ENCODE measurements at regions of chr22 and their contacts with region 1.

Region 1: GRCh38 chr22:41403532-41404318 is 22.0 kb downstream of the TEF start:
- DNase-seq: peak; percentile 76
- ATAC-seq: peak; percentile 92
- H3K4me3 ChIP-seq: peak overlapping the region in 1 of 3 experiments; percentile 56; a peak in 1 of 6 replicates
- H3K27ac ChIP-seq: no peak overlapping the region
- H3K4me1 ChIP-seq: peaks cover 47% of the 10 kb centered on the region
- H3K27me3 ChIP-seq: no peaks in the 10 kb centered on the region
- CTCF ChIP-seq: peak; percentile 100
- EP300 ChIP-seq: no peak
- POLR2A ChIP-seq: no peak
- RAD21 ChIP-seq: peak; percentile 98

Region 2: GRCh38 chr22:41204992-41205900 is 198.5 kb before region 1 on chr22 and contains the start of gene L3MBTL2:
- CTCF ChIA-PET with region 1: no interaction called
- POLR2A ChIA-PET with region 1: no interaction called
- in situ Hi-C with region 1: no loop called
- intact Hi-C with region 1: no loop called
- DNase-seq: peak; percentile 95
- ATAC-seq: peak; percentile 100
- H3K4me3 ChIP-seq: peak within 1 kb of the TSS; percentile 70 to 90 (median 81)
- H3K27ac ChIP-seq: peak within 1 kb of the TSS; percentile 69
- H3K4me1 ChIP-seq: peaks cover 34% of the 10 kb centered on the region
- H3K27me3 ChIP-seq: peaks cover 0 to 2% of the 10 kb centered on the region in 2 experiments; a peak in 2 of 5 replicates
- CTCF ChIP-seq: 0 out of 2 replicates have a peak, but pooled peaks have one; percentile 1
- EP300 ChIP-seq: no peak
- POLR2A ChIP-seq: peak; percentile 76 to 80
- RAD21 ChIP-seq: no peak
- total RNA-seq, gene L3MBTL2: 33.7 and 37.6 TPM in 2 replicates

Region 3: GRCh38 chr22:41468381-41469217 is 64.9 kb after region 1 on chr22 and contains the starts of genes ACO2 and PHF5A:
- CTCF ChIA-PET with region 1: no interaction called
- POLR2A ChIA-PET with region 1: interaction called, 18 read pairs
- in situ Hi-C with region 1: no loop called
- intact Hi-C with region 1: no loop called
- DNase-seq: peak; percentile 96
- ATAC-seq: peak; percentile 93
- H3K4me3 ChIP-seq: peak within 1 kb of the TSS; percentile 92 to 95 (median 92)
- H3K27ac ChIP-seq: peak within 1 kb of the TSS; percentile 98
- H3K4me1 ChIP-seq: peaks cover 66% of the 10 kb centered on the region
- H3K27me3 ChIP-seq: no peaks in the 10 kb centered on the region; a peak in 1 of 5 replicates
- CTCF ChIP-seq: no peak; the same call in 1 of the 2 replicates
- EP300 ChIP-seq: peak in 1 of 2 experiments; percentile 100; a peak in 2 of 4 replicates
- POLR2A ChIP-seq: peak; percentile 75 to 82
- RAD21 ChIP-seq: no peak
- total RNA-seq, gene ACO2: 39.3 and 45.6 TPM in 2 replicates
- total RNA-seq, gene PHF5A: 105 and 154 TPM in 2 replicates

Region 4: DNA sequence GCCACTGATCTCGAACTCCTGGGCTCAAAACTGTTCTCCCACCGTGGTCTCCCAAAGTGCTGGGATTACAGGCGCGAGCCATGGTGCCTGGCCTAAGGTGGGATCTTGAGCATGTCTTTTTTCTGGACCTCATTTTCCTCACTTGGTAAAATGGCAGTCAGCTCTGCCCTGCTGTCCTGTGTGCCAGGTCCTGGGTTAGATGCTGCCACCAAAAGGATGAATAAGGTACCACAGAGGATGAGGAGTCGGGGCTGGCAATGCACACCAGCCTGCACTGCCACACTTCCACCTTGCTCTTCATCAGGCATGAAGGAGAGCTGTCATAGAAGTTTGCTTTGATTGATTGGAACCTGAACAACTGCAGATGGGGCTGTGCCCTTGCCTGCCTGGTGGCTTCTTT is 97.5 kb after region 1 on chr22:
- CTCF ChIA-PET with region 1: interaction called, 8 read pairs
- POLR2A ChIA-PET with region 1: no interaction called
- in situ Hi-C with region 1: no loop called
- intact Hi-C with region 1: loop called (anchors 1 kb)
- DNase-seq: peak; percentile 23
- ATAC-seq: peak; percentile 79
- H3K4me3 ChIP-seq: no peak overlapping the region
- H3K27ac ChIP-seq: no peak overlapping the region
- H3K4me1 ChIP-seq: no peaks in the 10 kb centered on the region
- H3K27me3 ChIP-seq: no peaks in the 10 kb centered on the region
- CTCF ChIP-seq: peak; percentile 53
- EP300 ChIP-seq: no peak
- POLR2A ChIP-seq: no peak
- RAD21 ChIP-seq: 0 out of 2 replicates have a peak, but pooled peaks have one; percentile 38

Region 5: DNA sequence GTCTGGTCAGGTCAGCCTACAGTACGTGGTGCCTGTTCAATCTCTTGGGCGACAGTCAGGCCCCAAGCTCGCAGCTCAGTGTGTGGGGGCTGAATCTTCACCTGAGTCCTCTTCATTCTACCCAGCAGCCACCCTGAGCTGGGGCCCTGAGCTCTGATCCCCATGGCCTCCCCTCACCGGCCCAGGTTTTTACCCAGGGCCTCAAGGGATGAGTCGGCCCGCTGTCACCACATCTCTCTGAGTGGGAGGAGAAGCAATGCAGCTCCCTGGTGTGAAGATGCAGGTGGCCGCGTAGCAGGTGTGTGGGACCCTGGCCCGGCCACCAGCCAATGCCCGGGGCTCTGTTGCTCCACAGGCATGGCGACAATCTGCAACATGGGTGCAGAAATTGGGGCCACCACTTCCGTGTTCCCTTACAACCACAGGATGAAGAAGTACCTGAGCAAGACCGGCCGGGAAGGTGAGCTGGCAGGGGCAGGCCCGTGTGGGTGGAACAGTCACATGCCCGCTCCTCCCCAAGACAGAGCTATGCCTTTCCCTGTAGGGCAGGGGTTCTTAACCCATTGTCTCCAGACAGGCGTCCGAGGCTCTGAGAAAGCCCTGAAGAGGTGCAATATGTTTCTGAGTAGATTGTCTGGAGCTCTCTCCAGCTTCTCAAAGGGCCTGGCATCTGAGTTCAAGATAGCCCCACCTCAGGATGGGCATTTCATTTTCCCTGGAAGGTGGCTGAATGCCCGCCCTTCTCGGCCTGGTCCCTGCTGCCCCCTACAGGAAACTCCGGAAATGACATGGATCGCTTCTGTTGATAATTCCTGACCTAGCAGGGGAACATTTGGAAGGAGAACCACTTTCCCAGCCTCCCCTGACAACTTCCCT is 113.7 kb after region 1 on chr22:
- CTCF ChIA-PET with region 1: interaction called, 37 read pairs
- POLR2A ChIA-PET with region 1: interaction called, 4 read pairs
- in situ Hi-C with region 1: loop called (anchors 5 kb)
- intact Hi-C with region 1: loop called (anchors 2 kb)
- DNase-seq: peak; percentile 27
- ATAC-seq: peak; percentile 36
- H3K4me3 ChIP-seq: no peak overlapping the region
- H3K27ac ChIP-seq: no peak overlapping the region
- H3K4me1 ChIP-seq: peaks cover 7% of the 10 kb centered on the region
- H3K27me3 ChIP-seq: no peaks in the 10 kb centered on the region
- CTCF ChIP-seq: peak; percentile 92
- EP300 ChIP-seq: no peak
- POLR2A ChIP-seq: no peak
- RAD21 ChIP-seq: peak; percentile 85

Region 6: DNA sequence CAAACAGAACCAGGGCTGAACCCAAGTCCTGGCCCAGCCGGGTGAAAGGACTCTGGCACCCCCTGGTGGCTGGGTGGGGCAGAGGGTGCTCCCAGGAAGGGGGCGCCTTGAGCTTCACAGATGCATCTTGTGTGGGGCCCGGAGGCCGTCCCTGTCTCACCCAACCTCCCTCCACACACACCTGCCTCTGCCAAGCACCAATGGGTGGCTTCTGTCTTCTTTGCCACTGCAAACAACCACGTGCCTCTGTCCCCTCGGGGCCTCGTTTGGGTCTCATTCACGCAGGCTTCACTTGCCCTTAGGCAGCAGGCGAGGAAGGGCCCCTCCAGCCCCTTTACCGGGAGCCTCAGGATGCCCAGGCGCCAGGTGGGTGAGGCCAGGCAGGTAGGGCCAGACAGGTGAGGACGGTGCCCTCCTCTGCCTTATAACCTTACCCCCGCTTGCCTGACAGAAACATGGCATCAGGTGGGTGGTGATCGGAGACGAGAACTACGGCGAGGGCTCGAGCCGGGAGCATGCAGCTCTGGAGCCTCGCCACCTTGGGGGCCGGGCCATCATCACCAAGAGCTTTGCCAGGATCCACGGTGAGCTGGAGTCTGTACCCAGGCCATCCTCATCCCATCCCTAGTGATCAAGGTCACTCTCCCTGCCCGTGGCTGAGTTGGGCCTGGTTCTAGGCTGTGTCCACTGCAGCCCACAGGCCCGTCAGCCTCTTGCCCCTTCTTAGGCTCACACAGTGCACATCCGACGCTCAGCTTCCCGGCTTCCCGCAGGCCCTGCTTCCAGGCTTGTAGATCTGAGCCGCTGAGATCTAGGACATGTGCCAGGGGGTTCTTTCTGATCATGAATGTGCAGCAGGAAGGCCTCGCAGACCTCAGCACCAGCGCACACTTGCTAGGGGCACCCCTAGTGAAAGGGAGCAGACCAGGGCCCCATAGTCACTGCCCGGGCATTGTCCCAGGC is 123.4 kb after region 1 on chr22:
- CTCF ChIA-PET with region 1: interaction called, 11 read pairs
- POLR2A ChIA-PET with region 1: interaction called, 7 read pairs
- in situ Hi-C with region 1: no loop called
- intact Hi-C with region 1: no loop called
- DNase-seq: no peak
- ATAC-seq: peak; percentile 56
- H3K4me3 ChIP-seq: no peak overlapping the region
- H3K27ac ChIP-seq: peak overlapping the region; percentile 58
- H3K4me1 ChIP-seq: peaks cover 66% of the 10 kb centered on the region
- H3K27me3 ChIP-seq: no peaks in the 10 kb centered on the region
- CTCF ChIP-seq: peak; percentile 83
- EP300 ChIP-seq: no peak
- POLR2A ChIP-seq: peak in 1 of 2 experiments; percentile 36; a peak in 1 of 4 replicates
- RAD21 ChIP-seq: peak; percentile 59